Heart left ventricle (tissue), 16 donors: ENCODE measurements at regions of chr21 and their contacts with region 1.

Region 1: DNA sequence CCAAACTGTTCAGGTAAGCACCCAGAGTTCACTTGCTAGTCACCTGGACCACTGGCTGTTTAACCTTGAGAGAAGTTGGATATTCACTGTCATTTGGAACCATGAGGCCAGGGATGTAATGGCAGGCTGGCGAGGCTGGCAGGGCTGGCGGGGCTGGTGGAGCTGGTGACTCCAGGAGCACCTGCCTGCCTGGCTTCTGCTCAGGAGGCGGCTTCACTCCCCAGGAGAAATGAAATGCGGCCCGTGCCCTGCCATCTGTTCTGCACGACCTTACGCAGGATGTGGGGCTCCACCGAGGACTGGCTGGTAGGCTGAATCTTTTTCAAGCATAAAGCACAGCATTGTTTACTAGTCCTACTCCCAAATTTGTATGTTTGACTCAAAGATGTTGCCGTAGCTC is 22.7 kb upstream of the MX1 start:
- DNase-seq: no peak
- ATAC-seq: no peak
- H3K4me3 ChIP-seq: no peak overlapping the region
- H3K27ac ChIP-seq: no peak overlapping the region
- H3K4me1 ChIP-seq: peaks cover 0 to 8% (median 0%) of the 10 kb centered on the region in 12 donors
- H3K27me3 ChIP-seq: no peaks in the 10 kb centered on the region
- CTCF ChIP-seq: no peak
- POLR2A ChIP-seq: no peak

Region 2: DNA sequence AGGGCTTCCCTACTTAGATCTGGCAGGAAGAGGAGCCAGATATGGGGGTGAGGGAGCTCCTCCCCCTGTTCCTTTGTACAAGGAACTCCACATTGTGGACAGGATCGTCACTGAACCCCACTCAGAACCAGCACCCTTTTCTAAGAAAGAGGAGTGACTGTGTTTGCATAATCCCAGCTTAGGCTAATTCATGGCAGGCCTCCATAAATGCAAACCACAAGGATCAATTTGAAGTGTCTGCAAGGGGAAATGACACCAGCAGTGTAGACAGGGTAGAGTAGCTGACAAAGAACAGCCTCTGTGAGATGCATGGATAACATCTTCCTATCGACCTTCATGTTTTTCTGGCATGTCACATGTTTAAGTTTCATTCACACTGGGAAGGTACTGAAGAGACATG is 34.4 kb after region 1 on chr21:
- intact Hi-C with region 1: loop called in 1 of 10 experiments (anchors 5 kb)
- DNase-seq: no peak
- ATAC-seq: no peak
- H3K4me3 ChIP-seq: no peak overlapping the region
- H3K27ac ChIP-seq: no peak overlapping the region
- H3K4me1 ChIP-seq: no peaks in the 10 kb centered on the region
- H3K27me3 ChIP-seq: no peaks in the 10 kb centered on the region
- CTCF ChIP-seq: no peak
- POLR2A ChIP-seq: no peak